ENCODE measurements at regions of chr11 and their contacts with region 1.

Region 1: GRCh38 chr11:86041975-86042378 is 26.9 kb downstream of the PICALM start:
- H3K4me3 Mint-ChIP-seq: peak overlapping the region; percentile 49
- H3K27ac Mint-ChIP-seq: peak overlapping the region; percentile 61
- H3K4me1 Mint-ChIP-seq: peaks cover 76% of the 10 kb centered on the region
- H3K27me3 Mint-ChIP-seq: no peaks in the 10 kb centered on the region

Region 2: DNA sequence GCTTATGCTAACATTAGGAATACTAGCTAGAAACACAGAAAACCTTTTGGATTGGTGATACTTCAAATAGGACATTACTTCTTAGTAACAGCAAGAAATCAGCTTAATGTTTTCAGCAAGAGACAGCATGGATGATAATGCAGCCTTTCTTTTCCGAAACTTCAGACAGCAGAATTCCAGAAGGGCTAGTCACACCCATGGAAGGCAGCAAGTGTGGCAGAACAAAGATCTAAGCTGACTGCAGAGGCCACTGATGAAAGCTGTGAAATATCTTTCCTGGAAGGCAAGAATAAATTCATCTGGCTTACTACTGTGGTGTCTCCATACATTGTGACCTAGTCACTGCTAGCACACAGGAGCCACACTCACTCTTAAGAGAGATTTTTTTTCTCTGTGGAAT is 86.4 kb before region 1 on chr11:
- intact Hi-C with region 1: no loop called
- H3K4me3 Mint-ChIP-seq: no peak overlapping the region
- H3K27ac Mint-ChIP-seq: no peak overlapping the region
- H3K4me1 Mint-ChIP-seq: peaks cover 21% of the 10 kb centered on the region
- H3K27me3 Mint-ChIP-seq: no peaks in the 10 kb centered on the region

Region 3: GRCh38 chr11:86058360-86058759 is 16.4 kb after region 1 on chr11:
- intact Hi-C with region 1: loop called (anchors 2 kb)
- H3K4me3 Mint-ChIP-seq: no peak overlapping the region
- H3K27ac Mint-ChIP-seq: peak overlapping the region; percentile 47
- H3K4me1 Mint-ChIP-seq: peaks cover 84% of the 10 kb centered on the region
- H3K27me3 Mint-ChIP-seq: no peaks in the 10 kb centered on the region

Region 4: DNA sequence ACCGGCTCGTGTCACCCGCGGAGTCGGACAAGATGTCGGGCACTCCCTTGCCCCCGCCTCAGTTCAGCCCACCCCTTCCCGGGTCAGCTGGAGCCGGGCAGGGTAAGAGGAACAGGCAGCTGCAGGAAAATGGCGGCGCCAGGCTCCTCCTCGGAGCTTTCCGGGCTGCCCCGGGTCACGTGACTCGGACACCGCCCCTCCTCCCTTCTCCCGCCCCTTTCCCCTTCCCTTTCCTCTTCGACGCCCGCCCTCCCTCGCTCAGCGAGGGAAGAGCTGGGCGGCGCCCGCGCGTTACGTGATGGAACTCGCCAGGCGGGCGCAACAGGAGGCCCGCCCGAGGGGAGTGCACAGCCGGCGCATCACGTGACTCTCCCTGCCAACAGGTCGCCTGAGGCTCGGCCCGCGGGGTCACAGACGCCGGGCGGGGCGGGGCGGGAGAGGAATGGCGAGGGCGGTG is 27.0 kb after region 1 on chr11 and contains the start of gene PICALM:
- intact Hi-C with region 1: loop called (anchors 2 kb)
- H3K4me3 Mint-ChIP-seq: peak within 1 kb of the TSS; percentile 97
- H3K27ac Mint-ChIP-seq: peak within 1 kb of the TSS; percentile 99
- H3K4me1 Mint-ChIP-seq: peaks cover 37% of the 10 kb centered on the region
- H3K27me3 Mint-ChIP-seq: no peaks in the 10 kb centered on the region

Region 5: DNA sequence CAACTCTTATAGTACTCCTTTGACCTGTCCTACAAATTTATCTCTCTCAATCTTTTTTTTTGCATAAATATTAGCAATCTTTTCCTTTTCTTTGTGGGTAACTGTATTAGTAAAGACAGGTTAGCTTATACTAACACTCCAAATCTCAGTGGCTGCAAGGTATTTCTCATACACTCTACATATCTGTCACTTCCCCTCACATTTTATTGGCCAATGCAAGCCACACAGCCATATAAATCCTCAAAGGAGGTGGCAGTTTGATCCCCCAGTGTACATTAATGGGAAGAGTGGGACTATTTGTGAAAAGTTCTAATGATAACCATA is 160.0 kb after region 1 on chr11:
- intact Hi-C with region 1: loop called (anchors 5 kb)
- H3K4me3 Mint-ChIP-seq: no peak overlapping the region
- H3K27ac Mint-ChIP-seq: no peak overlapping the region
- H3K4me1 Mint-ChIP-seq: peaks cover 28% of the 10 kb centered on the region
- H3K27me3 Mint-ChIP-seq: no peaks in the 10 kb centered on the region

Measured in dendritic cell treated with granulocyte-macrophage colony-stimulating factor and Interleukin-4, amounts not matched to agents 40 ng/mL and 50 ng/mL, for 4 days (primary cell).